ENCODE measurements at regions of chr2 and their contacts with region 1.

Region 1: GRCh38 chr2:197255543-197255942 is 55.0 kb downstream of the ANKRD44 start:
- DNase-seq: peak; percentile 82 to 90
- ATAC-seq: peak; percentile 87 to 96 (median 94)
- H3K4me3 ChIP-seq: peak overlapping the region; percentile 23
- H3K4me3 Mint-ChIP-seq: peak overlapping the region; percentile 85
- H3K27ac ChIP-seq: peak overlapping the region; percentile 93
- H3K27ac Mint-ChIP-seq: peak overlapping the region; percentile 96 to 99
- H3K4me1 ChIP-seq: peaks cover 49% of the 10 kb centered on the region
- H3K4me1 Mint-ChIP-seq: peaks cover 72 to 73% of the 10 kb centered on the region in 2 donors
- H3K27me3 ChIP-seq: no peaks in the 10 kb centered on the region
- H3K27me3 Mint-ChIP-seq: no peaks in the 10 kb centered on the region
- CTCF ChIP-seq: no peak

Region 2: DNA sequence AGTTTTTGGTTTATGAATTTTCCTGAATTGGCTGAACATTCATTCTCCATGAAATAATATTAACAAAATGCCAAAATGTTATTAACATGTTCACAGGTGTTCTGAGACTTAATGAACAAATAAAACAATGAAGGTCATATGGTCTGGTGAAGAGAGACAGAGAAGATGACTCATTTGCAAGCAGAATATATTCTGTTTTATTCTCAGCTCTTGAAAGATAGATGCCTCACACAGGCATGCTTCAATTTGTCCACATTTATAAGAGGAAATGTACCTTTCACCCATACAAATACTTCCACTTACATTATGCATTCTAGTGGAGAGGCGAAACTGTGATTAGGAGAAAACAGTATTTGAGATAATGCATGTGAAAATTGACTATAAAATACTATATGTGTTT is 253.6 kb before region 1 on chr2:
- intact Hi-C with region 1: no loop called
- DNase-seq: no peak
- ATAC-seq: no peak
- H3K4me3 ChIP-seq: no peak overlapping the region
- H3K4me3 Mint-ChIP-seq: no peak overlapping the region
- H3K27ac ChIP-seq: no peak overlapping the region
- H3K27ac Mint-ChIP-seq: peak overlapping the region in 1 of 2 donors; percentile 70
- H3K4me1 ChIP-seq: no peaks in the 10 kb centered on the region
- H3K4me1 Mint-ChIP-seq: no peaks in the 10 kb centered on the region
- H3K27me3 ChIP-seq: no peaks in the 10 kb centered on the region
- H3K27me3 Mint-ChIP-seq: no peaks in the 10 kb centered on the region
- CTCF ChIP-seq: no peak

Region 3: GRCh38 chr2:197198890-197199289 is 56.7 kb before region 1 on chr2:
- intact Hi-C with region 1: loop called (anchors 2 kb)
- DNase-seq: peak; percentile 75 to 97
- ATAC-seq: peak; percentile 80 to 93 (median 93)
- H3K4me3 ChIP-seq: peak overlapping the region; percentile 48
- H3K4me3 Mint-ChIP-seq: peak overlapping the region; percentile 95
- H3K27ac ChIP-seq: peak overlapping the region; percentile 87
- H3K27ac Mint-ChIP-seq: peak overlapping the region; percentile 91 to 98
- H3K4me1 ChIP-seq: peaks cover 55% of the 10 kb centered on the region
- H3K4me1 Mint-ChIP-seq: peaks cover 93 to 94% of the 10 kb centered on the region in 2 donors
- H3K27me3 ChIP-seq: no peaks in the 10 kb centered on the region
- H3K27me3 Mint-ChIP-seq: no peaks in the 10 kb centered on the region
- CTCF ChIP-seq: no peak

Region 4: GRCh38 chr2:197293252-197294007 is 37.9 kb after region 1 on chr2:
- intact Hi-C with region 1: loop called (anchors 2 kb)
- DNase-seq: peak in 1 of 2 donors; percentile 69
- ATAC-seq: peak; percentile 55 to 80 (median 68)
- H3K4me3 ChIP-seq: peak overlapping the region; percentile 13
- H3K4me3 Mint-ChIP-seq: peak overlapping the region; percentile 74
- H3K27ac ChIP-seq: peak overlapping the region; percentile 92
- H3K27ac Mint-ChIP-seq: peak overlapping the region; percentile 94 to 97
- H3K4me1 ChIP-seq: peaks cover 54% of the 10 kb centered on the region
- H3K4me1 Mint-ChIP-seq: peaks cover 86 to 88% of the 10 kb centered on the region in 2 donors
- H3K27me3 ChIP-seq: no peaks in the 10 kb centered on the region
- H3K27me3 Mint-ChIP-seq: no peaks in the 10 kb centered on the region
- CTCF ChIP-seq: no peak

Region 5: DNA sequence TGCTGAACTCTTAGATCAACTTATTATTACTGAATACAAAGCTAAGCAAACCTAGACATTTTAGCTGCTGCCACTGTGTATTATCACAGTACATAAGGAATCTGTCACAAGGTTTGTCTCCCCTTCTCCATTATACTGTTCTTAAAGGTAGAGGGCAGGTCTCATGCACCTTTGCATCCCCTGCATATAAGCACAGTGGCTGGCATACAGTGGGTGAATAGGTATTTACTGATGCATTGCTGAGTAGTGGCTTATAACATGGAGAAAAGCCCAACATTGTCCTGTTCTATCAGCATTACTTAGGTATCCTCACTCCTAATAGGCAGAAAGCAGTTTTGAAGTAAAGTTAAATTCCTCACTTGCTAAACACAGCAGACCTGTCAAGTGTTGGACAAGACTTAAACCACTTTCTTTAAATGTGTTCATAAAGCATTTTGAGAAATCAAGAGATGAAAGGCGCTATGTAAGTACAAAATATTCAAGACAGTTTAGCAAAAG is 135.7 kb after region 1 on chr2:
- intact Hi-C with region 1: no loop called
- DNase-seq: no peak
- ATAC-seq: peak in 2 of 3 donors; percentile 15 to 23
- H3K4me3 ChIP-seq: no peak overlapping the region
- H3K4me3 Mint-ChIP-seq: no peak overlapping the region
- H3K27ac ChIP-seq: no peak overlapping the region
- H3K27ac Mint-ChIP-seq: no peak overlapping the region
- H3K4me1 ChIP-seq: no peaks in the 10 kb centered on the region
- H3K4me1 Mint-ChIP-seq: no peaks in the 10 kb centered on the region
- H3K27me3 ChIP-seq: no peaks in the 10 kb centered on the region
- H3K27me3 Mint-ChIP-seq: no peaks in the 10 kb centered on the region
- CTCF ChIP-seq: no peak

Region 6: DNA sequence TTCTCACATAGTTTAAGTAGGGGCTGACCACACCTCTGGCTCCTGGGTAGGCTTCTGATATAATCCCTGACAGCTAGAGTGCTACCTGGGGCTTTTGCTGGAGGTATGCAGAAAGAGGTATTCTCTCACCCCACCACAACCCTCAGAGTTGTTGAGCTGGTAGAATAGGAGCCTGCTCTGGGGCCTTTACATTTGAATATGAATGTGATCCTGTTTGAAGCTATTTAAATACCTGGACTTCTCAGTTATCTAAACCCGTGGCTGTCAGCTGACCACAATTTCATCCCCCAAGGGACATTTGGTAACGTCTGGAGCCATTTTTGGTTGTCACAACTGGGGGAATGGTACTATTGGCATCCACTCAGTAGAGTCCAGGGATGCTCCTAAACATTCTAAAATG is 1533.1 kb after region 1 on chr2:
- intact Hi-C with region 1: no loop called
- DNase-seq: no peak
- ATAC-seq: no peak
- H3K4me3 ChIP-seq: no peak overlapping the region
- H3K4me3 Mint-ChIP-seq: no peak overlapping the region
- H3K27ac ChIP-seq: no peak overlapping the region
- H3K27ac Mint-ChIP-seq: no peak overlapping the region
- H3K4me1 ChIP-seq: no peaks in the 10 kb centered on the region
- H3K4me1 Mint-ChIP-seq: no peaks in the 10 kb centered on the region
- H3K27me3 ChIP-seq: no peaks in the 10 kb centered on the region
- H3K27me3 Mint-ChIP-seq: no peaks in the 10 kb centered on the region
- CTCF ChIP-seq: no peak